ENCODE measurements at regions of chr12 and their contacts with region 1.

Region 1: GRCh38 chr12:75933101-75933500 is 98.5 kb downstream of the PHLDA1 start:
- DNase-seq: no peak
- H3K4me3 Mint-ChIP-seq: no peak overlapping the region
- H3K27ac Mint-ChIP-seq: peak overlapping the region; percentile 89
- H3K4me1 Mint-ChIP-seq: peaks cover 49% of the 10 kb centered on the region
- H3K27me3 Mint-ChIP-seq: peaks cover 4% of the 10 kb centered on the region

Region 2: GRCh38 chr12:75334384-75335030 is 598.6 kb before region 1 on chr12 and contains the start of gene GLIPR1L1:
- intact Hi-C with region 1: loop called (anchors 5 kb)
- DNase-seq: peak; percentile 67
- H3K4me3 Mint-ChIP-seq: peak within 1 kb of the TSS; percentile 70
- H3K27ac Mint-ChIP-seq: no peak within 1 kb of the TSS
- H3K4me1 Mint-ChIP-seq: peaks cover 36% of the 10 kb centered on the region
- H3K27me3 Mint-ChIP-seq: peaks cover 35% of the 10 kb centered on the region
- total RNA-seq, gene GLIPR1L1: not detected in 2 replicates

Region 3: GRCh38 chr12:75641031-75641780 is 291.9 kb before region 1 on chr12:
- intact Hi-C with region 1: loop called (anchors 2 kb)
- DNase-seq: peak; percentile 32
- H3K4me3 Mint-ChIP-seq: peak overlapping the region; percentile 19
- H3K27ac Mint-ChIP-seq: peak overlapping the region; percentile 89
- H3K4me1 Mint-ChIP-seq: peaks cover 34% of the 10 kb centered on the region
- H3K27me3 Mint-ChIP-seq: no peaks in the 10 kb centered on the region

Region 4: GRCh38 chr12:75816897-75817296 is 116.2 kb before region 1 on chr12:
- intact Hi-C with region 1: loop called (anchors 1 kb)
- DNase-seq: no peak
- H3K4me3 Mint-ChIP-seq: no peak overlapping the region
- H3K27ac Mint-ChIP-seq: no peak overlapping the region
- H3K4me1 Mint-ChIP-seq: peaks cover 29% of the 10 kb centered on the region
- H3K27me3 Mint-ChIP-seq: peaks cover 4% of the 10 kb centered on the region

Region 5: DNA sequence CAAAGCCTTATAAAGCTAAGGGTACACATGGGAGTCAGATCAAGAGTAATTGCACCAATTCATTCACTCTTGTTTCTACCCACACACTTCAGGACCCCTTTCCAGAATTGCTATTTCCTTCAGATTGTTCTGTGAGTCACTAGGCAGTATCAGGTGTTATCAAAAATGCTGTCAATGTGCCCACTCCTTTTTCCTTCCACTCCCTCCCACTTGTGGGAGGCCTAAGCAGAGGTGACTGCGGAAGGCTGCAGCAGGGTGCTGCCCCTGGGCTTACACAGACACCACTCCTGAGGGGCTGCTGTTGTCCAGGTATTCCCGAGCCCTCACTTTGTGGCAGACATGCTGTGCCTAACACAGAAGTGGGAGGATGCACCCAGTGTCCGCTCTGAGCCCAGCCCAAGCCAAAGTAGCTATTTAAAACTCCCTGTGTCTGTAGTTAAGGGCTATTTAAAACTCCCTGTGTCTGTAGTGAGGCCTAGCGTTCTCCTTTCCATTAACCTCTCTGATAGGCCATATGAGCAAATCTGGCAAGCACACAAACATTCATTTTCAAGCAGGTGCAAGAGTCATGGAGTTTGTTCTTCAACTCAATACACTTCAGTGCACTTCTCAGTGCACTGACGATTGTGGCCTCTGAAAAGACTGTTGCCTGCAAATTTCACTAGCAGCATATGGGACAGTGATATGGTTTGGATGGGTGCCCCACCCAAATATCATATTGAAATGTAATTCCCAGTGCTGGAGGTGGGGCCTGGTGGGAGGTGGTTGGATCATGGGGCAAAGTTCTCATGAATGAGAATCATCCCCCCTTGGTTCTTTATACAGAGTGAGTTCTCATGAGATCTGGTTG is 19.4 kb before region 1 on chr12:
- intact Hi-C with region 1: loop called (anchors 1 kb)
- DNase-seq: no peak
- H3K4me3 Mint-ChIP-seq: no peak overlapping the region
- H3K27ac Mint-ChIP-seq: peak overlapping the region; percentile 79
- H3K4me1 Mint-ChIP-seq: peaks cover 34% of the 10 kb centered on the region
- H3K27me3 Mint-ChIP-seq: peaks cover 1% of the 10 kb centered on the region

Region 6: GRCh38 chr12:75994186-75994731 is 61.2 kb after region 1 on chr12:
- intact Hi-C with region 1: loop called (anchors 1 kb)
- DNase-seq: no peak
- H3K4me3 Mint-ChIP-seq: peak overlapping the region; percentile 5
- H3K27ac Mint-ChIP-seq: peak overlapping the region; percentile 88
- H3K4me1 Mint-ChIP-seq: peaks cover 49% of the 10 kb centered on the region
- H3K27me3 Mint-ChIP-seq: no peaks in the 10 kb centered on the region

Region 7: DNA sequence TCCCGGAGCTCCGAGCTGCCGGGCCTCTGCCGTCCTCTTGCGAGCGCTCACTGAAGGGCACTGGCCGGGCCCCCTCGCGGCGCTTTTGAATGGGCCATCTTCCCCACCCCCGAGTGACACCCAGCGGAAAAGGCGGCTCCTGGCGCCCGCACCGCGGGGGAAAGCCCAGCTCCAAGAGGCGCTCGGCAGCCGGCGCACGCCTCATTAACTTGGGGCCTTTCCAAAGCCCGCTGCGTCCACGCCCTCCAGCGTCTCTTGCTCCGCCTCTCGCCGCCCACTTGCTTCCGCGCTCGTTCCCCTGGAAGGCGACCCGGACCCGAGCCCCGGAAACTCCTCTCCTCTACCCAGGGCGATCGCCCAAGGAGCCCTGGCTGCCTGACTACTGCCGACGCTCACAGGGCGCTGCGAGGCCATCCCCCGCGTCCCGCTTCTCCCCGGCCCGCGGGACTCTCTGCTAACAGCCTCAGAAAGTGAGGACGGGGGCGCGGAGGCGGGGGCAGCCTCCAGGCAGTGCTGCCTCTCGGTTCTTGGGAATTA is 98.5 kb after region 1 on chr12 and contains the start of gene PHLDA1:
- intact Hi-C with region 1: loop called (anchors 1 kb)
- DNase-seq: peak; percentile 95
- H3K4me3 Mint-ChIP-seq: peak within 1 kb of the TSS; percentile 99
- H3K27ac Mint-ChIP-seq: peak within 1 kb of the TSS; percentile 99
- H3K4me1 Mint-ChIP-seq: peaks cover 34% of the 10 kb centered on the region
- H3K27me3 Mint-ChIP-seq: peaks cover 3% of the 10 kb centered on the region
- total RNA-seq, gene PHLDA1: 88.9 and 91.5 TPM in 2 replicates